Ascending aorta (tissue), 2 donors: ENCODE measurements at regions of chr11 and their contacts with region 1.

Region 1: GRCh38 chr11:66466225-66467027 is at the start of gene PELI3:
- DNase-seq: peak; percentile 59 to 96
- H3K4me3 ChIP-seq: peak within 1 kb of the TSS; percentile 77 to 92
- H3K27ac ChIP-seq: peak within 1 kb of the TSS; percentile 66 to 69
- H3K4me1 ChIP-seq: peaks cover 10 to 14% of the 10 kb centered on the region in 2 donors
- H3K27me3 ChIP-seq: no peaks in the 10 kb centered on the region
- CTCF ChIP-seq: no peak
- total RNA-seq, gene PELI3: 13.2 TPM

Region 2: GRCh38 chr11:66150140-66150539 is 316.3 kb before region 1 on chr11:
- intact Hi-C with region 1: no loop called
- DNase-seq: no peak
- H3K4me3 ChIP-seq: no peak overlapping the region
- H3K27ac ChIP-seq: no peak overlapping the region
- H3K4me1 ChIP-seq: peaks cover 0 to 4% of the 10 kb centered on the region in 2 donors
- H3K27me3 ChIP-seq: no peaks in the 10 kb centered on the region
- CTCF ChIP-seq: no peak

Region 3: GRCh38 chr11:66438504-66439466 is 27.6 kb before region 1 on chr11 and contains the start of gene MRPL11:
- intact Hi-C with region 1: loop called (anchors 2 kb)
- DNase-seq: peak; percentile 53 to 93
- H3K4me3 ChIP-seq: peak within 1 kb of the TSS; percentile 59 to 82
- H3K27ac ChIP-seq: peak within 1 kb of the TSS; percentile 58 to 74
- H3K4me1 ChIP-seq: peaks cover 3 to 4% of the 10 kb centered on the region in 2 donors
- H3K27me3 ChIP-seq: no peaks in the 10 kb centered on the region
- CTCF ChIP-seq: peak; percentile 58 to 78 (median 61)
- total RNA-seq, gene MRPL11: 96.2 TPM

Region 4: DNA sequence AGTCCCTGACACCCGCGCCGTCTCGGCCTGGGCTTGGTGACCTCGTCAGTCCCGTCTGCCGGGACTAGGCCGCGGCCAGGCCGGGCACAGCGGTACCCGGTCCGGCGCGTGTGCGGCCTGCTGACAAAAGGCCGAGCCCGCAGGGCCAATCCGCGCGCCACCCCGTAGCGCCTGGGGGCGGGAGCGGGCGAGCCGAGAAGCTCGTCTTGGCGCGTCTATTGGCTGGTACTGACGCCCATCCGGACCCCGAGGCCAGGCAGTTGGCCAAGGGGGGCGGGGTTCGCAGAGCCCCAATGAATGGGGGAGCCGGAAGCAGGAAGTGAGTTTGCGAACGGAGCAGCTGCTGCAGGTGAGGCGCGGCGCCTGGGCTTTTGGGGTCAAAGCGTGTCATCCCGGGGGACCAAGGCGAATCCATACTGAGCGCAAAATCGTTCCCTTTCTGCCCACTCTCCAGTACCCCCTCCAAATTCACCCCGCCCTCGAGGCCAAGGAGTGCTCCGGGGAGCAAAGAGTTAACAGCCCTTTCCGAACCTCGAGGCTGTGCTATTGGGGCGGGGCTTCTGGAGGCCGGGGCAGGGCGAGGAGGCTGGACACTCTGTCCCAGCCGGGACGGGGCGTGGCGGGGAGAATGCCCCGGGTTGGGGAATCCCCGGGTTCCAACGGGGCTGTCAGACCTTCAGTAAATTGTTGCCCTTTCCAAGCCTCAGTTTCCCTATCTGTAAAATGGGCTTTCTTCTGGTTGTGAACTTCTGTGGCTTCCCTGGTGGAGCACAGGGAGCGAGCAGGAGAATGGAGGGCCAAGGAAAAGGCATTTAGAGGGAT is 13.9 kb after region 1 on chr11 and contains the start of gene DPP3:
- intact Hi-C with region 1: loop called (anchors 1 kb)
- DNase-seq: peak; percentile 88 to 98
- H3K4me3 ChIP-seq: peak within 1 kb of the TSS; percentile 67 to 75
- H3K27ac ChIP-seq: peak within 1 kb of the TSS; percentile 84 to 92
- H3K4me1 ChIP-seq: peaks cover 0 to 13% of the 10 kb centered on the region in 2 donors
- H3K27me3 ChIP-seq: no peaks in the 10 kb centered on the region
- CTCF ChIP-seq: no peak
- total RNA-seq, gene DPP3: 14.8 TPM

Region 5: GRCh38 chr11:66842896-66843775 is 376.7 kb after region 1 on chr11 and contains the start of gene RCE1:
- intact Hi-C with region 1: loop called (anchors 5 kb)
- DNase-seq: peak; percentile 56 to 92
- H3K4me3 ChIP-seq: peak within 1 kb of the TSS; percentile 76 to 90
- H3K27ac ChIP-seq: peak within 1 kb of the TSS; percentile 93 to 99
- H3K4me1 ChIP-seq: peaks cover 12 to 23% of the 10 kb centered on the region in 2 donors
- H3K27me3 ChIP-seq: no peaks in the 10 kb centered on the region
- CTCF ChIP-seq: no peak
- total RNA-seq, gene RCE1: 45.7 TPM